ENCODE measurements at regions of chr2 and their contacts with region 1.

Region 1: DNA sequence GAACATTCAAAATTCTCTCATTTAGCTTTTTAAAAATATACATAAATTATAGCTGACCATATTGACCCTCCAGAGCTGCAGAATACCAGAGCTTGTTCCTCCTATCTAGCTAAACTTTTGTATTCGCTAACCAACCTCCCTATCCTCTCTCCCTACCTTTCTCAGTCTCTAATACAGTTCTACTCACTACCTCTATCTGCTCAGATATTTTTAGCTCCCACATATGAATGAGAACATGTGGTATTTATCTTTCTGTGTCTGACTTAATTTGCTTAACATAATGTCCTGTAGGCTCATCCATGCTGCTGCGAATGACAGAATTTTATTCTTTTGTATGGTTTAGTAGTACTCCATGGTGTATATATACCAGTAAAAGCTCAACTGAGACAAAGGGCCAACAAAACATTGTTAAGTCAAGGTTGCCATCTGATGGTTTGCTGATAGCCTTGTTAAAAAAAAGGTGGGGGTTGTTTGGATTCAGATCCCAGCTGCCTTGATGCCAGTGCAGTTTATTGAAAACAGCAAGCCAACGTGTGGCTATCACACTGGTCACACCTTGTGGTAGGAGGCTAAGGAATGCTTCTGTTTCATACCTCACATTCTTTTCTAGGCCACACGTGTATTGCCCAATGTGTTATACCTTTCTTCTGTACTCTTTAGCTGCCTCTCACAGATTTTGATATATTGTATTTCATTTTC is 101.5 kb downstream of the VWA3B start:
- DNase-seq: no peak
- H3K4me3 ChIP-seq: no peak overlapping the region
- CTCF ChIP-seq: no peak
- POLR2A ChIP-seq: no peak

Region 2: DNA sequence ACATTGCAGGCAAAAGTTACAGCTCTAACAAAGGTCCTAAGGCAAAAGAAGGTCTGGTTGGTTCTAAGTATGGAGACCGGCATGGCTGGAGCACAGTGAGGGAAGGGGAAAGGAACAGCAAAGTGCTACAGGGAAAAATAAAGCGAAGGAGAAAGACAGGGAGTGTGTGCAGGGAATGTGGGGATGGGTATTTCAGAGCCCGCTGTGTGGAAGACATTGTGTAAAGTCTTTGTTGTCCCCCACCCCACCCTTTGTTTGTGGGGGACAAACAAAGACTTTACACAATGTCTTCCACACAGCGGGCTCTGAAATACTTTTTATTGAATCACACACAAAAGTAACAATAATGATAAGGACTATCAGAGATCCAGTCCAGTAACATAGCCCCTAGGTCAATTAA is 924.1 kb after region 1 on chr2:
- intact Hi-C with region 1: loop called (anchors 10 kb)
- DNase-seq: no peak
- H3K4me3 ChIP-seq: no peak overlapping the region
- CTCF ChIP-seq: no peak
- POLR2A ChIP-seq: no peak

Region 3: GRCh38 chr2:99504844-99505584 is 1316.5 kb after region 1 on chr2:
- intact Hi-C with region 1: no loop called
- DNase-seq: no peak
- H3K4me3 ChIP-seq: no peak overlapping the region
- CTCF ChIP-seq: no peak
- POLR2A ChIP-seq: no peak

Measured in lower leg skin (tissue), 4 donors.